Gastrocnemius medialis (tissue), 4 donors: ENCODE measurements at regions of chr2 and their contacts with region 1.

Region 1: GRCh38 chr2:72150157-72150865 is 2.6 kb upstream of the CYP26B1 start:
- DNase-seq: peak; percentile 61 to 69
- ATAC-seq: peak; percentile 78 to 84
- H3K4me3 ChIP-seq: peak overlapping the region in 3 of 4 donors; percentile 53 to 66 (median 55)
- H3K27ac ChIP-seq: no peak overlapping the region
- H3K4me1 ChIP-seq: peaks cover 38 to 49% of the 10 kb centered on the region in 2 donors
- H3K27me3 ChIP-seq: peaks cover 39 to 43% (median 41%) of the 10 kb centered on the region in 3 donors
- CTCF ChIP-seq: peak; percentile 82 to 92 (median 89)
- POLR2A ChIP-seq: no peak

Region 2: DNA sequence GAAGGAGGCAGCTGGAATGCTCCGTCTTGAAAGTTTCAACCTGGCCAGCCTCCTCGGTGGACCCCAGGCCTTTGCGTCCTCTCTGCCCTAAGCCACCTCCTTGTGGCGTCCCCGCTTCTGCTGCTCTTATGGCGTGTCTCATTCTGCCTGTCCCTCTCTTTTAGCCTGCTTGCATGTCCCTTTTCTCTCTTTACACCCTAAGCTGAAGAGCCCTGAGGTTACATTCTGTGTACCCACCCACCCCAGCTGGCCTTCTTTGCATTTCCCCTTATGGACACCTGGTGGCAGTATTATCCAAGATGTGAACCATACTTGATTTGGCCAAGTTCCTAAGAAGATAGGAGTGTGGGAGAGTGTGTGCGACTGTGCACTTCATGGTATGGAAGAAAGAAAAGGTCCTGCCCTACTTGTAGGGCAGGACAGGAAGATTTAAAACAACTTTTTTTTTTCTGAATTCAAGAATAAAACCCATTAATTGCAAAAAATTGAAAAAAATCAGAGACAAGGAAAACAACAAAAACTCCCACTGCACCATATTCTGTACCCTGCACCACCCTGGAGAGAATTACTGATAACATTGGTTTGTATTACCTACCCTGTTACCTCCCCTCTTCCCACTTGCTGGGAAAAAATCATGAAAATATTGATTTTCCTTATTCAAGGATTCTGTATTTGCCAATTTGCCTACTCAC is 619.5 kb before region 1 on chr2:
- in situ Hi-C with region 1: loop called in 1 of 4 experiments (anchors 10 kb)
- intact Hi-C with region 1: no loop called
- DNase-seq: peak in 1 of 2 donors; percentile 21
- ATAC-seq: peak; percentile 46 to 73
- H3K4me3 ChIP-seq: no peak overlapping the region
- H3K27ac ChIP-seq: no peak overlapping the region
- H3K4me1 ChIP-seq: no peaks in the 10 kb centered on the region
- H3K27me3 ChIP-seq: no peaks in the 10 kb centered on the region
- CTCF ChIP-seq: peak; percentile 41 to 69 (median 59)
- POLR2A ChIP-seq: no peak

Region 3: GRCh38 chr2:71609958-71610357 is 540.4 kb before region 1 on chr2:
- in situ Hi-C with region 1: no loop called
- intact Hi-C with region 1: loop called (anchors 5 kb)
- DNase-seq: no peak
- ATAC-seq: peak; percentile 38 to 50
- H3K4me3 ChIP-seq: no peak overlapping the region
- H3K27ac ChIP-seq: peak overlapping the region; percentile 5 to 45 (median 15)
- H3K4me1 ChIP-seq: peaks cover 16% of the 10 kb centered on the region in 2 donors
- H3K27me3 ChIP-seq: no peaks in the 10 kb centered on the region
- CTCF ChIP-seq: peak in 2 of 5 experiments; percentile 27 to 29
- POLR2A ChIP-seq: no peak

Region 4: GRCh38 chr2:71807975-71808451 is 342.3 kb before region 1 on chr2:
- in situ Hi-C with region 1: loop called (anchors 5 to 25 kb)
- intact Hi-C with region 1: no loop called
- DNase-seq: peak in 1 of 2 donors; percentile 33
- ATAC-seq: peak in 1 of 2 donors; percentile 51
- H3K4me3 ChIP-seq: no peak overlapping the region
- H3K27ac ChIP-seq: no peak overlapping the region
- H3K4me1 ChIP-seq: peaks cover 0 to 4% of the 10 kb centered on the region in 2 donors
- H3K27me3 ChIP-seq: no peaks in the 10 kb centered on the region
- CTCF ChIP-seq: no peak
- POLR2A ChIP-seq: no peak

Region 5: GRCh38 chr2:71943238-71944182 is 206.8 kb before region 1 on chr2:
- in situ Hi-C with region 1: no loop called
- intact Hi-C with region 1: loop called (anchors 1 kb)
- DNase-seq: peak; percentile 38 to 64
- ATAC-seq: peak; percentile 9 to 16
- H3K4me3 ChIP-seq: no peak overlapping the region
- H3K27ac ChIP-seq: peak overlapping the region; percentile 49 to 92 (median 74)
- H3K4me1 ChIP-seq: peaks cover 41 to 49% of the 10 kb centered on the region in 2 donors
- H3K27me3 ChIP-seq: no peaks in the 10 kb centered on the region
- CTCF ChIP-seq: no peak
- POLR2A ChIP-seq: no peak

Region 6: DNA sequence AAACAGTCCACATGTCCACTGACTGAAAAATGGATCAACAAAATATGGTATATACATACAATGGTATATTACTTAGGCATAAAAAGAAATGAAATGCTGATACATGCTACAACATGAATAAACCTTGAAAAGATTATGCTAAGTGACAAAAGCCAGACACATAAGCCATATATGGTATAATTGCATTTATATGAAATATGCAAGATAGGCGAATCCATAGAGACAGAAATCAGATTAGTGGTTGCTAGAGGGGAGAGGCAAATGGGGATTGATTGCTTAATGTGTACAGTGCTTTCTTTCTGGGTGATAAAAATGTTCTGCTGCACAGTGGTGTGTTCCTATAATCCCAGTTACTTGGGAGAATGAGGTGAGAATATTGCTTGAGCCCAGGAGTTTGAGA is 173.6 kb before region 1 on chr2:
- in situ Hi-C with region 1: no loop called
- intact Hi-C with region 1: no loop called
- DNase-seq: no peak
- ATAC-seq: no peak
- H3K4me3 ChIP-seq: no peak overlapping the region
- H3K27ac ChIP-seq: no peak overlapping the region
- H3K4me1 ChIP-seq: no peaks in the 10 kb centered on the region
- H3K27me3 ChIP-seq: no peaks in the 10 kb centered on the region
- CTCF ChIP-seq: no peak
- POLR2A ChIP-seq: no peak

Region 7: DNA sequence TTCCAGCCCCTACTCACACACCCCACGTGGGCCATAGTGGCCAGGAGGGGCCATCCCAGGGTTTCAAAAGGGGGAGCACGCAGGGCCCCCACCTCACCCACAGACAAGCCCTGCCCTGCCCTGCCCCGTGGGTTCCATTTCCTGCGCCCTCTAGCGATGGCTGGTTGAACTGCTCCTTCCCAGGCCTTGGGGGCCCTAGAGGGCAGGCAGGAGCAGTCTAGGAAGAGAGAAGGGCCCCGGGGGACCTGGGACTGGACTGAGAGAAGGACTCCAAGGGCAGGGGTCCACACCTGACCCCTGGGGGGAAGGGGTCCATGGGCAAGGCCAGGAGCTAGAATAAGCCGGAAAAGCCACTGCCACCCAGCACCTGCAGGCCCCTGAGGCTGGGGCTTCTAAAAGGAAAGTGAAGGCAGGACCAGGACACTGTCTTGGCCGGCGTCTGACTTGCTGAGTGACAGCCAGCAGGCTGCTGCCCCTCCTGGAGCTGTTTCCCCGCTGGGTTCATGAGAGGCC is 12.8 kb before region 1 on chr2:
- in situ Hi-C with region 1: no loop called
- intact Hi-C with region 1: loop called (anchors 1 kb)
- DNase-seq: peak in 1 of 2 donors; percentile 39
- ATAC-seq: peak; percentile 53 to 86
- H3K4me3 ChIP-seq: peak overlapping the region in 1 of 4 donors; percentile 11
- H3K27ac ChIP-seq: no peak overlapping the region
- H3K4me1 ChIP-seq: peaks cover 3 to 19% of the 10 kb centered on the region in 2 donors
- H3K27me3 ChIP-seq: no peaks in the 10 kb centered on the region
- CTCF ChIP-seq: peak; percentile 66 to 95 (median 80)
- POLR2A ChIP-seq: no peak

Region 8: DNA sequence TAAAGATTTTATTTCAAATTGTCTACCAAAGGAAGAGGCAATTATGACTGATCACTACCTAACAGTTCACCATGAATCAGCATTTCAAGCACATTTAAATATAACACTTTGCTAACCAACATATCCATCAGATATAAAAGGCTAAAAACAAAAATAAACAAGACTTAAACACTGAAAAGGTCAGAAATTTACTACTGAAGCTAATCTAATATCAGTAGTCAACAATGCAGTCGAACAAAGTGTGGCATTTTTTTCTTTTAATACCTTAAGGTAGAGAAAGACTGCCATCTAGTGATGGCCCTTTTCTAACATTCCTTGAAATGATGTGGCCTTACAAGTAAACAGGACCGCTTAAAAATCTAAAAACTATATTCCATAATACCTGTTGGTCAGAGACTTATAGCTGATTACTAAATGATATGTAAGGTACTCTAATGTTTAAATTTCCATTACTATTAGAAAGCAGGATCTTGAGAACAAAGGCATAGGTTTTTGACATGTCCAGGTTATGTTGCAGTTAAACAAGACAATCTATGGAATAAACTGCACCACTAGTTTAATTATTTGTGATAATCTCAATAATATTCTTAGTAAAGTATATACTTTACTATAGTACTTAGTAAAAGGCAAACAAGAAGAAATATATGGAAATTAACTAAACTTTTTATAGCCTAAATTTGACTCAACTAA is 595.5 kb after region 1 on chr2:
- in situ Hi-C with region 1: loop called in 1 of 4 experiments (anchors 25 kb)
- intact Hi-C with region 1: no loop called
- DNase-seq: no peak
- ATAC-seq: peak; percentile 68 to 78
- H3K4me3 ChIP-seq: peak overlapping the region in 2 of 4 donors; percentile 1 to 19
- H3K27ac ChIP-seq: no peak overlapping the region
- H3K4me1 ChIP-seq: peaks cover 0 to 10% of the 10 kb centered on the region in 2 donors
- H3K27me3 ChIP-seq: no peaks in the 10 kb centered on the region
- CTCF ChIP-seq: peak; percentile 20 to 79 (median 69)
- POLR2A ChIP-seq: no peak